ENCODE measurements at regions of chr18 and their contacts with region 1.

Region 1: DNA sequence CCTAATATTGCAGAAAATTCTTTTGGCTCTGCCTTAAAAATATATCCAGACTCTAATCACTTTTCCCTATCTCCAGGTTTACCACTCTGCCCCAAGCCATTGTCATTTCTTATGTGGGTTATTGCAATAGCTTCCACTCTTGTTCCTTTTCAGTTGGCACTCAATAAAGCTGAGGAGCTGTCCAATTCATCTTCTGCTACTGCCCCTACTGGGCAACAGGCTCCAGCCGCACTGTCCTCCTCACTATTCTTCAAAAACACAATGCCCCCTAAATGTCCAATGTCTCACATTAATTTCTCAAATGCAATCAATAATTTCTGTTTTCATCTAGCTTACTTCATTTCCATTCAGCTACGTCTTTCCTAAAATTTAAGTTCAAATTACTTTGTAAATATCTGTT is 1262.5 kb upstream of the CDH2 start:
- DNase-seq: no peak
- H3K4me3 ChIP-seq: no peak overlapping the region
- H3K27ac ChIP-seq: no peak overlapping the region
- H3K4me1 ChIP-seq: no peaks in the 10 kb centered on the region
- H3K27me3 ChIP-seq: no peaks in the 10 kb centered on the region
- CTCF ChIP-seq: no peak
- POLR2A ChIP-seq: no peak

Region 2: DNA sequence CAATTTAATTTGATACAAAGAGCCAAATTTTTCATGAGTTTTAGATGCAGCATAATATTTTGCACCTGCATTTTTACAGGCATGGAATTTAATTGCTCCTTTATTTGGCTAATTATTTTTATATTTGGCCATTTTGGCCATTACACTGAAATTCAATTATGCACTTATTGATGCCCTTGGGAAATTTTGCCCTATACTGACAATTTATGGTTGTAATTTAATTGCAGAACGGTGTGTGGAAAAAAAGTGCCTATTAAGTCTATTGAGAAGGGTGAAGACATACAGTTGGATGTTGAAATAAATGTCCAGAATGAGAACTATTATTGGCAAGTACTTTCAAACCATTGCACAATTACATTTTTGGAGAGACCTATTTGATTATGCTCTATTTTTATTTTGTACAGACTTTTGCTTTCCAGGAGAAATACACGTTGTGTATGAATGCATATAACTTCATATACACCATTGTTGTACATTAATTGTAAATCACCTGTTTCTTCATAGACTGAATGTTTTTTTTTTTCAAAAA is 56.8 kb after region 1 on chr18:
- intact Hi-C with region 1: loop called (anchors 10 kb)
- DNase-seq: no peak
- H3K4me3 ChIP-seq: no peak overlapping the region
- H3K27ac ChIP-seq: no peak overlapping the region
- H3K4me1 ChIP-seq: no peaks in the 10 kb centered on the region
- H3K27me3 ChIP-seq: no peaks in the 10 kb centered on the region
- CTCF ChIP-seq: no peak
- POLR2A ChIP-seq: no peak